Activated naive CD4-positive, alpha-beta T cell treated with anti-CD3 and anti-CD28 coated beads for 36 hours (primary cell): ENCODE measurements at regions of chr7 and their contacts with region 1.

Region 1: GRCh38 chr7:43834463-43835251 is 34.7 kb downstream of the MRPS24 start:
- DNase-seq: peak; percentile 55
- H3K4me3 Mint-ChIP-seq: peak overlapping the region; percentile 64
- H3K27ac Mint-ChIP-seq: peak overlapping the region; percentile 76
- H3K4me1 Mint-ChIP-seq: peaks cover 34% of the 10 kb centered on the region
- H3K27me3 Mint-ChIP-seq: no peaks in the 10 kb centered on the region

Region 2: DNA sequence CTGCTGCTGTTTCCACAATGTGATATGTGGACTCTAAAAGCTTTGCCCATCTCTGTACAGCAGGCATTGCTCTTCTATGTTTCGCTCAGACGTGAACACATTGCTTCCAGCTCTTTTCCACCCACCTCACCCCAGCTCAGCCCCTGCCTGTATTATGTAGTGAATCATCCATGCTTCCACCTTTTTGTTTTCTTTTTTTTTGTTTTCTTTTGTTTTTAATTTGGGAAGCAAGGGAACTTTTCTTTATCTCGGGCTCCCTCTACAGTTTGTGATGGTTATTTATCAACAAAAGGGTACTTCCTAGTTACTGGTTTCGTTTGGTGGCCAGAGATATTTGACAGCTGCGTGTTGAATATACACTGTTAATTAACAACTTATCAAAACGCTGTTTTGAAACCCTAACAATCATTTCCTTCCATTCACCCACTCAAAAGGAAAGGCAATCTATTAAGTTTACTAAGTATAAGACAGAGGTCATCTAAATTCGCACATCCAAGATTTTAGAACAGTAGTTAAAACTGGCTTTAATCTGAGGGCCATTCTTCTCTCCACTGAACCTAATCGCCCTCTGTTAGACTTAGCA is 379.6 kb before region 1 on chr7:
- CTCF ChIA-PET with region 1: interaction called, 5 read pairs
- intact Hi-C with region 1: loop called (anchors 1 kb)
- DNase-seq: no peak
- H3K4me3 Mint-ChIP-seq: no peak overlapping the region
- H3K27ac Mint-ChIP-seq: no peak overlapping the region
- H3K4me1 Mint-ChIP-seq: no peaks in the 10 kb centered on the region
- H3K27me3 Mint-ChIP-seq: no peaks in the 10 kb centered on the region

Region 3: GRCh38 chr7:43721193-43721806 is 113.4 kb before region 1 on chr7:
- CTCF ChIA-PET with region 1: interaction called, 8 read pairs
- intact Hi-C with region 1: loop called (anchors 2 kb)
- DNase-seq: no peak
- H3K4me3 Mint-ChIP-seq: no peak overlapping the region
- H3K27ac Mint-ChIP-seq: no peak overlapping the region
- H3K4me1 Mint-ChIP-seq: peaks cover 46% of the 10 kb centered on the region
- H3K27me3 Mint-ChIP-seq: no peaks in the 10 kb centered on the region

Region 4: GRCh38 chr7:43735802-43736541 is 98.7 kb before region 1 on chr7:
- CTCF ChIA-PET with region 1: interaction called, 9 read pairs
- intact Hi-C with region 1: loop called (anchors 1 kb)
- DNase-seq: peak; percentile 86
- H3K4me3 Mint-ChIP-seq: no peak overlapping the region
- H3K27ac Mint-ChIP-seq: peak overlapping the region; percentile 75
- H3K4me1 Mint-ChIP-seq: peaks cover 22% of the 10 kb centered on the region
- H3K27me3 Mint-ChIP-seq: peaks cover 7% of the 10 kb centered on the region

Region 5: DNA sequence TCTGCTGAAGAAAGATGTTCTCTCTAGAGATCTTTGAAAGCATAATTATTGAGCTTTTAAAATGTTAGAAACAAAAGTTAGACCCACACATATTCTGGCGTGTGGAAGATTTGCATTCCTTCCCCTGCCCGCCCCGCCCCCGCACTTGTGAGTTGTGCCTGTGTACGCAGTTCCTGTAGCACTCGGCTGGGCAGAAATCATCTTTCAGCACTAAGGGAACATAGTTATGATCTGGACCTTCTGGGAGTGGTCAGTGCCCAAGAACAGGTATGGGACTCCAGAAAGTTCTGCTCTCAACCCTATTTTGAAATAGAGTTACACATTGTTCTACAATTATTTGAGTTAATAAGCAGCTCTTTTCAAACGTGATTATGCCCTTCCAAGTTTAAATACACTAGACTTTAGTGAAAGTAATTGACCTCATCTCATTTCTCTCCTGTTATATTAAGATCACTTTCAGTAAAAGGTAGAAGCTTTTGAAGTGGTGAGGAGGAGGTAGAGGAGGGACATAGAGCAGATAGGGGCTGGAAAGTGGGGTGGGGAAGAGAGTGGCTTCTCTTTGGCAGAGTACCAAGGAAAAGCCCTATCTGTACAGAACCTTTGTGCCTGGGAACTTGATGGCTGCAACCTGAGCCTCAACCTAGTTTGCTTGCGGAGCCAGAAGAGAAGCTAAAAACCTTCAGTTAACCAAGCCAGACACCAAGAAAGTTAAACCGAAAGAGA is 70.5 kb before region 1 on chr7:
- CTCF ChIA-PET with region 1: interaction called, 4 read pairs
- intact Hi-C with region 1: loop called (anchors 2 kb)
- DNase-seq: peak; percentile 75
- H3K4me3 Mint-ChIP-seq: peak overlapping the region; percentile 47
- H3K27ac Mint-ChIP-seq: no peak overlapping the region
- H3K4me1 Mint-ChIP-seq: peaks cover 45% of the 10 kb centered on the region
- H3K27me3 Mint-ChIP-seq: no peaks in the 10 kb centered on the region

Region 6: DNA sequence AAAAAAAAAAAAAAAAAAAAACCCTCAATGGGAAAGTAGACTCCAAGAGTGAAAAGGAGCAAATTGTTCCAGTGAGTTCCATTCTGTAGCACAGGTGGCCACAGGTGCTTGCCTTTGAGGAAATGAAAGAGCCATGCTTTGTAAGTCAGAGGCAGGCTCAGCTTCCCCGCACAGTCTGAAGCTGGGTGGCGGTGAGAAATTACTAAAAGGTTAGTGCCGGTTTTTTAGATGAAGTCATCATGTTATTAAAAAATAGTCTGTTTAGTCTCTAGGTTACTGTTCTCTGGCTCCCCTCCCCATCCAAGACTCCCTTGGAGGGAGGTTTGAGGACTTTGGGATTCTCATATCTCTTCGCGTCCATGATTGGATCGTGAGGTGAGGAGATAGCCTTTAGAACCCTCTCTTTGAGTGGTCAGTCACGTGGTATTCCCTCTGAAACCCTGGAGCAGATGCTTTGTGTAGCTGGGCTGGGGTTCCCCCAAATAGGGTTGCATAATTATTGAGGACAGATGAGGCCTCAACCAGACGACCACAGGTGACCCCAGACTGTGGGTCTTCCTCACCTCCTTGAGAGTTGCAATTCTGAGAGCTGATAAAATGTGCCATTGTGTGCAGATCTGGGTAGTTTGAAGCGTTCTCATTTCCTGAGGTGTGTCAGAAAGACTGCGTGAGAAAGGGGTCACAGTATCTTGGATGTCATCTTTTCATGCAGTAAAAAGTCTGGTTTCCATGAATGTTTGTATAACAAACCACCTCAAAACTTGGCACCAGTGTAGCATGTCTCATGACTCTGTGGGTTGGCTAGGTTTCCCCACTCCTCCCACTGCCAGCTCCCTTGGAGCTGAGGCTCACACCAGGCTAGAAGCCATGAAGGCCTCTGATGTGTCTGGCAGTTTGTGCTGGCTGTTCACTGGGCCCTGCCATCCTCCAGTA is 798.9 kb after region 1 on chr7:
- CTCF ChIA-PET with region 1: no interaction called
- intact Hi-C with region 1: no loop called
- DNase-seq: peak; percentile 63
- H3K4me3 Mint-ChIP-seq: no peak overlapping the region
- H3K27ac Mint-ChIP-seq: peak overlapping the region; percentile 80
- H3K4me1 Mint-ChIP-seq: peaks cover 77% of the 10 kb centered on the region
- H3K27me3 Mint-ChIP-seq: no peaks in the 10 kb centered on the region